CD4-positive, alpha-beta memory T cell (primary cell): ENCODE measurements at regions of chr2 and their contacts with region 1.

Region 1: GRCh38 chr2:118003396-118003824 is 10.5 kb downstream of the CCDC93 start:
- DNase-seq: peak; percentile 63 to 73 (median 69)
- H3K4me3 ChIP-seq: no peak overlapping the region
- H3K4me3 Mint-ChIP-seq: peak overlapping the region in 1 of 8 donors; percentile 1
- H3K27ac ChIP-seq: no peak overlapping the region
- H3K27ac Mint-ChIP-seq: peak overlapping the region in 6 of 7 donors; percentile 5 to 85 (median 65)
- H3K4me1 ChIP-seq: no peaks in the 10 kb centered on the region
- H3K4me1 Mint-ChIP-seq: peaks cover 7 to 17% (median 14%) of the 10 kb centered on the region in 4 donors
- H3K27me3 ChIP-seq: no peaks in the 10 kb centered on the region
- H3K27me3 Mint-ChIP-seq: no peaks in the 10 kb centered on the region

Region 2: DNA sequence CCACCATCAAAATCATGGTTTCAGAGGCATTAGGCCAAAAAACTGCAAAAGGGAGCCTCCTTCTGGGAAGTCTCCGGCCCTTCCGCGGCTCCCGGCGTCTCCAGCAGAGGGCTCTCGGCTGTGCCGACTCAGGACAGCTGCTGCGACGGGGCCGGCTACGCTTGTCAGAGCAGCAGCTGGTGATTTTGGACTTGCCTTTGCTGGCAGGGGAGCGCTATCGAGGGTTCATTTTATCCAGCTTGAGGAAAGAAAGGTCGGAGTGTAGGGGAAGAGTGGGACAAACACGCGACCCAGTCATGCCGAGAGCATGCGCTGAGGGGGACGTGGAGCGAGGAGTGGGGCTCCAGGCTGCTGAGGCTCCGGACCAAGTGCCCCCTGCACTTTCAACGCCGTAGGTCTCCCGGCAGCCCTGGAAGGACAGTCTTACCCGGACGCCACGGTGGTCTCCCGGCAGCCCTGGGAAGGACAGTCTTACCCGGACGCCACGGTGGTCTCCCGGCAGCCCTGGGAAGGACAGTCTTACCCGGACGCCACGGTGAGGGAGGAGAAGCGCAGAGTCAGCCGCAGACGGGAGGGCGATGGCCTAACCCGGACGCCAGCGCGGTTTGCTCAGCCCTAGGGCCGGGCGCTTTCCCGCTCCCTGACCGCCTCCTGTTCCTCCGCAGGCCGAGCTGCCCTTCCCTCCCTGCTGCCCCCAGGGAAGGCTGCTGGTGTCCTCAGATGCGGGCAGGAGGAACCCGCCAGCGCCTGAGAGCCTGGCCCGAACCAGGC is 167.2 kb before region 1 on chr2:
- CTCF ChIA-PET with region 1: interaction called, 11 read pairs
- POLR2A ChIA-PET with region 1: no interaction called
- intact Hi-C with region 1: loop called (anchors 1 kb)
- DNase-seq: peak in 4 of 5 donors; percentile 20 to 39 (median 37)
- H3K4me3 ChIP-seq: no peak overlapping the region
- H3K4me3 Mint-ChIP-seq: peak overlapping the region; percentile 70 to 88 (median 78)
- H3K27ac ChIP-seq: no peak overlapping the region
- H3K27ac Mint-ChIP-seq: peak overlapping the region in 4 of 7 donors; percentile 53 to 92 (median 78)
- H3K4me1 ChIP-seq: no peaks in the 10 kb centered on the region
- H3K4me1 Mint-ChIP-seq: peaks cover 3 to 22% (median 10%) of the 10 kb centered on the region in 4 donors
- H3K27me3 ChIP-seq: no peaks in the 10 kb centered on the region
- H3K27me3 Mint-ChIP-seq: no peaks in the 10 kb centered on the region

Region 3: DNA sequence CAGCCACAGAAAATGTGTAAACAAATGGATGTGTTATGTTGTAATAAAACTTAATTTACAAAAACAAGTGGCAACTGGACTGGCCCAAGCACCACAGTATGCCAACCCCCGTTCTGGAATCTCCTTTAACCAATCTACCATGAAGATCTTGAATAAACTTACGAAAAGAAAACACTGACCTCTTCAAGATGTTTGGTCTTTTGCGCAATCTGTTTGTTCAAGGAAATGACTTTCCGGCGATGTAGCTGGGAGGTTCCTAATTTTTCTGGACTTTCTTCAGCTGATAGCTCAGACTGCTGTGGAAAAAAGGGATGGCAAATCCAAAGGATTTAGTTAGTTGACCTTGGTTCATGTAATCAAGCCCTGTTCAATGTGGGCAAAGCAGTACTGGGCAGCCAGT is 45.2 kb before region 1 on chr2:
- CTCF ChIA-PET with region 1: interaction called, 33 read pairs
- POLR2A ChIA-PET with region 1: no interaction called
- intact Hi-C with region 1: no loop called
- DNase-seq: no peak
- H3K4me3 ChIP-seq: no peak overlapping the region
- H3K4me3 Mint-ChIP-seq: no peak overlapping the region
- H3K27ac ChIP-seq: no peak overlapping the region
- H3K27ac Mint-ChIP-seq: peak overlapping the region in 2 of 7 donors; percentile 17
- H3K4me1 ChIP-seq: no peaks in the 10 kb centered on the region
- H3K4me1 Mint-ChIP-seq: peaks cover 0 to 5% (median under 1%) of the 10 kb centered on the region in 4 donors
- H3K27me3 ChIP-seq: no peaks in the 10 kb centered on the region
- H3K27me3 Mint-ChIP-seq: no peaks in the 10 kb centered on the region

Region 4: GRCh38 chr2:117977696-117978095 is 25.7 kb before region 1 on chr2:
- CTCF ChIA-PET with region 1: interaction called, 10 read pairs
- POLR2A ChIA-PET with region 1: no interaction called
- intact Hi-C with region 1: no loop called
- DNase-seq: no peak
- H3K4me3 ChIP-seq: no peak overlapping the region
- H3K4me3 Mint-ChIP-seq: no peak overlapping the region
- H3K27ac ChIP-seq: no peak overlapping the region
- H3K27ac Mint-ChIP-seq: peak overlapping the region in 2 of 7 donors; percentile 43 to 64
- H3K4me1 ChIP-seq: no peaks in the 10 kb centered on the region
- H3K4me1 Mint-ChIP-seq: peaks cover 0 to 7% (median 1%) of the 10 kb centered on the region in 4 donors
- H3K27me3 ChIP-seq: no peaks in the 10 kb centered on the region
- H3K27me3 Mint-ChIP-seq: no peaks in the 10 kb centered on the region

Region 5: GRCh38 chr2:118013724-118014491 is 10.5 kb after region 1 on chr2 and contains the start of gene CCDC93:
- CTCF ChIA-PET with region 1: interaction called, 58 read pairs
- POLR2A ChIA-PET with region 1: interaction called, 14 read pairs
- intact Hi-C with region 1: loop called (anchors 1 kb)
- DNase-seq: peak; percentile 85 to 94 (median 91)
- H3K4me3 ChIP-seq: peak within 1 kb of the TSS; percentile 57 to 95
- H3K4me3 Mint-ChIP-seq: peak within 1 kb of the TSS; percentile 94 to 98 (median 96)
- H3K27ac ChIP-seq: peak within 1 kb of the TSS; percentile 98
- H3K27ac Mint-ChIP-seq: peak within 1 kb of the TSS; percentile 90 to 97 (median 95)
- H3K4me1 ChIP-seq: peaks cover 35% of the 10 kb centered on the region
- H3K4me1 Mint-ChIP-seq: peaks cover 26 to 47% (median 34%) of the 10 kb centered on the region in 4 donors
- H3K27me3 ChIP-seq: no peaks in the 10 kb centered on the region
- H3K27me3 Mint-ChIP-seq: no peaks in the 10 kb centered on the region
- total RNA-seq, gene CCDC93: 73.1 to 73.3 TPM

Region 6: DNA sequence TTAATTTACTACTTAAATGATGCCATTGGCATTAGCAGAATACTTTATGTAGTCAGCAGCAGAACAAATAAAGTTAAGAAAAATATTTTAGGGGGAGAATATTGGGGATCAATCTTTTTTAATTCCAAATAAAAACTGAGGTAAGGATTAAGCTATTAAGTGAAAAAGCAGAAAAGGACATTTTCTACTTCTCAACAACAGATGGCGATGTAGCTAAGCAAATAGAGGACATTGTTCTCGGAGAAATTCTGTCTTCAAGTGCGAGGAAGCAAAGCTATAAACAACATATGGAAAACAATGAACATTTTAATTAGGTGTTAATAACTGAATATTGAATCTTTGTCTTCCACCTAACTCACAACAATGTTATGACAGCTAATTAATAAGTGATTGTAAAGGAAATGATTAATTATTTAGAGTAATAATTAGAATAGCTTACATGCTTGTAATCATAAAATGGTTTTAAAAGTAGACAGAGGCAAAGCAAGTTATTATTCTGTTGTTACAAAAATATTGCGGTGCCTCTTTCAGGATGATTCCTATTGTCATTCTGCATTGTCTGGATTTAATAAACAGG is 43.3 kb after region 1 on chr2:
- CTCF ChIA-PET with region 1: interaction called, 16 read pairs
- POLR2A ChIA-PET with region 1: no interaction called
- intact Hi-C with region 1: no loop called
- DNase-seq: peak in 4 of 5 donors; percentile 24 to 34 (median 26)
- H3K4me3 ChIP-seq: no peak overlapping the region
- H3K4me3 Mint-ChIP-seq: no peak overlapping the region
- H3K27ac ChIP-seq: no peak overlapping the region
- H3K27ac Mint-ChIP-seq: no peak overlapping the region
- H3K4me1 ChIP-seq: no peaks in the 10 kb centered on the region
- H3K4me1 Mint-ChIP-seq: no peaks in the 10 kb centered on the region
- H3K27me3 ChIP-seq: no peaks in the 10 kb centered on the region
- H3K27me3 Mint-ChIP-seq: peaks cover 24 to 45% of the 10 kb centered on the region in 2 donors

Region 7: GRCh38 chr2:118185210-118186109 is 182.1 kb after region 1 on chr2:
- CTCF ChIA-PET with region 1: no interaction called
- POLR2A ChIA-PET with region 1: no interaction called
- intact Hi-C with region 1: no loop called
- DNase-seq: peak in 3 of 5 donors; percentile 46 to 55 (median 50)
- H3K4me3 ChIP-seq: peak overlapping the region; percentile 73 to 80
- H3K4me3 Mint-ChIP-seq: peak overlapping the region; percentile 93 to 99 (median 96)
- H3K27ac ChIP-seq: peak overlapping the region; percentile 57
- H3K27ac Mint-ChIP-seq: peak overlapping the region; percentile 87 to 99 (median 95)
- H3K4me1 ChIP-seq: peaks cover 6% of the 10 kb centered on the region
- H3K4me1 Mint-ChIP-seq: peaks cover 15 to 25% (median 18%) of the 10 kb centered on the region in 4 donors
- H3K27me3 ChIP-seq: no peaks in the 10 kb centered on the region
- H3K27me3 Mint-ChIP-seq: no peaks in the 10 kb centered on the region